ENCODE measurements at regions of chr10 and their contacts with region 1.

Region 1: GRCh38 chr10:26571655-26572054 is 125.8 kb upstream of the PDSS1 start:
- DNase-seq: no peak
- H3K4me3 ChIP-seq: no peak overlapping the region
- H3K27ac ChIP-seq: no peak overlapping the region
- H3K4me1 ChIP-seq: no peaks in the 10 kb centered on the region
- H3K27me3 ChIP-seq: peaks cover 4 to 16% of the 10 kb centered on the region in 2 experiments
- CTCF ChIP-seq: no peak
- POLR2A ChIP-seq: no peak

Region 2: DNA sequence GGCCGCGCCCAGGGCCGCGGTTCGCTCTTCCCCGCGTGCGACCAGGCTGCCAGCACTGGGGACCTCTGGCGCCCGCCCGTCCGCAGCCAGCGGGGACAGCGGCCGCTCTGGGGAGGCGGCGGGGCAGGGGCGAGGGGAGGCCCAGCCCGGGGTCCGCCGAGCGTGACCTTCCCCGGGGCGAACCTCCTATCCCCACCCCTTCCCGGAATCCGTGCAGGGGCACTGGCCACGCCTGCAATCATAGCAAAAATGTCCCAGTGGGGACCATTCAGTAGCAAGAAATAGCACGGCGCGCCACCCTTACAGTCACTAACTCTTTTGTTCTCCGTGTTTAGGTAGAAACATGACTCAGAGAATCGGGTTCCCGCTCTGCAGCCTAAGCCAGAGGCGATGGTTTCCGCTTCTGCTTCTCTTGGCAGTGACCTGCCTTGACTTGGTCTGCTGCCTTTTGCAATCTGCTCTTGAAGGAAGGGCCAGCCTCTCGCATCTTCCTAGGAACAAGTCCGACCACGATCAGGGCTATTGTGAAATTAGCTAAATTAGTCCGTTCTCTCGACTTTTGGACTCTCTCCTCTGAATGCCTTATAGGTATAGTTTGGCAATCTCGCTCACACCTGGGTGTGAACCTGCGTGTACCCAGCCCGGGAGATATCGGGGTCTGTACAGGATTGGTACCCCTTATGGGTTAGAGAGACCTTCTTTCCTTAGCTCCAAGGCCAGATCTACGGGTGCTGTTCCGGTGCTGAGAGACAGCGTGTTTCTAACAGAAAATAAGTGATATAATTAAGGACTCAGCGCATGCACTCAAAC is 748.3 kb after region 1 on chr10:
- CTCF ChIA-PET with region 1: no interaction called
- POLR2A ChIA-PET with region 1: no interaction called
- dilution Hi-C with region 1: no loop called
- intact Hi-C with region 1: loop called (anchors 2 kb)
- DNase-seq: peak; percentile 53
- H3K4me3 ChIP-seq: peak overlapping the region in 2 of 3 experiments; percentile 33 to 34
- H3K27ac ChIP-seq: no peak overlapping the region
- H3K4me1 ChIP-seq: peaks cover 8% of the 10 kb centered on the region
- H3K27me3 ChIP-seq: no peaks in the 10 kb centered on the region
- CTCF ChIP-seq: no peak
- POLR2A ChIP-seq: no peak